ENCODE measurements at regions of chr9 and their contacts with region 1.

Region 1: GRCh38 chr9:100937377-100937776 is 91.2 kb upstream of the PLPPR1 start:
- DNase-seq: no peak
- H3K4me3 ChIP-seq: no peak overlapping the region
- H3K27ac ChIP-seq: no peak overlapping the region
- H3K4me1 ChIP-seq: no peaks in the 10 kb centered on the region
- H3K27me3 ChIP-seq: no peaks in the 10 kb centered on the region
- CTCF ChIP-seq: no peak
- POLR2A ChIP-seq: no peak

Region 2: GRCh38 chr9:100869321-100869720 is 68.1 kb before region 1 on chr9:
- intact Hi-C with region 1: no loop called
- DNase-seq: no peak
- H3K4me3 ChIP-seq: no peak overlapping the region
- H3K27ac ChIP-seq: no peak overlapping the region
- H3K4me1 ChIP-seq: no peaks in the 10 kb centered on the region
- H3K27me3 ChIP-seq: no peaks in the 10 kb centered on the region
- CTCF ChIP-seq: no peak
- POLR2A ChIP-seq: no peak

Region 3: DNA sequence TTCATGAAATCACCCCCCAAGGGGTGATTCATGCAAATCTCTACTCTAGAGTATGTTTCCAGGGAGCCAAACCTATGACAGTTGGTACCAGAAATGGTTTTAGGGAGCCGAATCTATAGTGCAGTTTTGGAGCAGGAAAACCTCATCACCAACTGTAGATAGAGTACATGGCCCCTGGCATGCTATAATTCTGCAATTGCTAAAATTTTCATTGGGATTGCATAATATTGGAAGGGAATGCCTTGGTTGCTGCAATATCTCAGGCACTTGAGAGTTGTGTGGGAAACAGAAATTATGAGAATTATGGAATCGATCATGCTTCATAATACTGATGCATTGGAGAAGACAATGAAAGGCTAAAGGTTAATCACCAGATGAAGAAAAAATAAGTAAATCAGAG is 57.1 kb before region 1 on chr9:
- intact Hi-C with region 1: no loop called
- DNase-seq: no peak
- H3K4me3 ChIP-seq: no peak overlapping the region
- H3K27ac ChIP-seq: no peak overlapping the region
- H3K4me1 ChIP-seq: no peaks in the 10 kb centered on the region
- H3K27me3 ChIP-seq: no peaks in the 10 kb centered on the region
- CTCF ChIP-seq: no peak
- POLR2A ChIP-seq: no peak

Region 4: DNA sequence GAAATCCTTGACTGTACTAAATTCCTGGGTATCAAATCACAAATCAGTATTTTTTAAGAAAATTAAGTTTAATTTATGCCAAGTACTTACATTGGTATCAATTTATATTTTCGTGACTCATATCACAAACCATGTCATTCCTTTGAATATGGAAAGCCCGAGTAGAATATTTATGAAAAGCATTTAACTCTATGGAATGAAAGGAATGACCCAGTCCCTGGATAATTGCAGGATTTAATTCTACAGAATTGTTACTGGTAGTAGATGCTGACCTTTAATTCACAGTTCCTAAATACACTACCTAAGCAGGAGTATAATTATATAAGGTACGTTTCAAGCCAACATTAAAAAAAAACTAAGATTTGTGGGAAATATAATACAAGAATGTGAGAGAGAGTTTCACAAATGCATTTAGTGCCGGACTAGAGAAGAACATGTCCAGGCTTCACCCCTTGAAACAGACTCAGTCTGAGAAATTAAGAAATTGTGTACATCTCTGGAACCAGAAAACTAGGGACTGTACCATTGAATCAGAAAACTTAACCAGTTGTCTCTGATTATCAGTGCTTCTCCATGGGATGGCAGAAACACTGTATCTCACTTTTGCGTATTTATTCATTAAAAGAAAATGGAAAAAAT is 62.6 kb after region 1 on chr9:
- intact Hi-C with region 1: loop called in 1 of 2 experiments (anchors 10 kb)
- DNase-seq: no peak
- H3K4me3 ChIP-seq: no peak overlapping the region
- H3K27ac ChIP-seq: no peak overlapping the region
- H3K4me1 ChIP-seq: no peaks in the 10 kb centered on the region
- H3K27me3 ChIP-seq: no peaks in the 10 kb centered on the region
- CTCF ChIP-seq: no peak
- POLR2A ChIP-seq: no peak

Measured in adrenal gland (tissue), 19 donors.